OCI-LY7 (cell line): ENCODE measurements at regions of chr6 and their contacts with region 1.

Region 1: DNA sequence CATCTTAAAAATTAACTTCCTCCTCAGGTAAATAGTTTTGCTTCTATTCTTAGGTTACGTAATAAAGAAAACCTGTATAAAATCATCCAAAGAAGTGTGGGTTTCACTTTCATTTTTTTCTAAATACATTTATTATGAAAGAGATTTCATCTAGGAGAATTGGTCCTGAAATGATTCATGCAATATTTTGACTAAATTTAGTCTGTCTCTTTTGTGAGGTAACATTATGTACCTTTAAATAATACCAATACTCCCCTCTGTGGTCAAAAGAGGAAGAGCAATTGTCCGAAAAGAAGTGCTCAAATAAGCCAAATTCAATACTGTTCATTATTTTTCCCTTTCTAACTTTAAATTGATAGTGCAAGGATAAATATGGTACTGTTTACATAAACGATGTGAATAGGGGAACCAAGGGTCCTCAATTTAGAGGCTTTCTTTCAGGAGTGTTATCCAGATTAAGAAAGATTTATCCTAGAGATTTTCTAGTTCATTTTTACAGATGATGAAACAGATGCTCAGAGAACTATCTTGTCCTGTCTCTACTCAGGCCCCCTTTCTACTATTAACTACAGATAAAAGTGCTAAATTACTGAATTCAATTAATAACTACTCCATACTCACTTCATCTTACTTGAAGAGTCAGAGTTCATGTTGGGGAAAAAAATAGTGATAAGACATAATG is 26.2 kb downstream of the CYP39A1 start:
- DNase-seq: peak; percentile 79
- H3K4me3 ChIP-seq: peak overlapping the region; percentile 50
- H3K27ac ChIP-seq: peak overlapping the region; percentile 94
- H3K4me1 ChIP-seq: peaks cover 66% of the 10 kb centered on the region
- CTCF ChIP-seq: peak; percentile 86

Region 2: GRCh38 chr6:46090115-46091079 is 536.0 kb before region 1 on chr6:
- CTCF ChIA-PET with region 1: no interaction called
- POLR2A ChIA-PET with region 1: no interaction called
- intact Hi-C with region 1: loop called (anchors 1 kb)
- DNase-seq: peak; percentile 63
- H3K4me3 ChIP-seq: no peak overlapping the region
- H3K27ac ChIP-seq: no peak overlapping the region
- H3K4me1 ChIP-seq: no peaks in the 10 kb centered on the region
- CTCF ChIP-seq: peak; percentile 92

Region 3: GRCh38 chr6:46491628-46492547 is 134.5 kb before region 1 on chr6:
- CTCF ChIA-PET with region 1: no interaction called
- POLR2A ChIA-PET with region 1: interaction called, 3 read pairs
- intact Hi-C with region 1: loop called (anchors 2 kb)
- DNase-seq: peak; percentile 39
- H3K4me3 ChIP-seq: peak overlapping the region; percentile 72
- H3K27ac ChIP-seq: no peak overlapping the region
- H3K4me1 ChIP-seq: peaks cover 6% of the 10 kb centered on the region
- CTCF ChIP-seq: peak; percentile 79

Region 4: GRCh38 chr6:46637145-46637544 is 10.8 kb after region 1 on chr6:
- CTCF ChIA-PET with region 1: no interaction called
- POLR2A ChIA-PET with region 1: interaction called, 8 read pairs
- intact Hi-C with region 1: loop called (anchors 1 kb)
- DNase-seq: peak; percentile 78
- H3K4me3 ChIP-seq: peak overlapping the region; percentile 66
- H3K27ac ChIP-seq: peak overlapping the region; percentile 97
- H3K4me1 ChIP-seq: peaks cover 98% of the 10 kb centered on the region
- CTCF ChIP-seq: no peak

Region 5: GRCh38 chr6:46781478-46782378 is 155.4 kb after region 1 on chr6:
- CTCF ChIA-PET with region 1: no interaction called
- POLR2A ChIA-PET with region 1: no interaction called
- intact Hi-C with region 1: loop called (anchors 1 kb)
- DNase-seq: peak; percentile 72
- H3K4me3 ChIP-seq: no peak overlapping the region
- H3K27ac ChIP-seq: no peak overlapping the region
- H3K4me1 ChIP-seq: no peaks in the 10 kb centered on the region
- CTCF ChIP-seq: peak; percentile 98